Posterior cingulate gyrus (tissue), 11 donors: ENCODE measurements at regions of chr16 and their contacts with region 1.

Region 1: DNA sequence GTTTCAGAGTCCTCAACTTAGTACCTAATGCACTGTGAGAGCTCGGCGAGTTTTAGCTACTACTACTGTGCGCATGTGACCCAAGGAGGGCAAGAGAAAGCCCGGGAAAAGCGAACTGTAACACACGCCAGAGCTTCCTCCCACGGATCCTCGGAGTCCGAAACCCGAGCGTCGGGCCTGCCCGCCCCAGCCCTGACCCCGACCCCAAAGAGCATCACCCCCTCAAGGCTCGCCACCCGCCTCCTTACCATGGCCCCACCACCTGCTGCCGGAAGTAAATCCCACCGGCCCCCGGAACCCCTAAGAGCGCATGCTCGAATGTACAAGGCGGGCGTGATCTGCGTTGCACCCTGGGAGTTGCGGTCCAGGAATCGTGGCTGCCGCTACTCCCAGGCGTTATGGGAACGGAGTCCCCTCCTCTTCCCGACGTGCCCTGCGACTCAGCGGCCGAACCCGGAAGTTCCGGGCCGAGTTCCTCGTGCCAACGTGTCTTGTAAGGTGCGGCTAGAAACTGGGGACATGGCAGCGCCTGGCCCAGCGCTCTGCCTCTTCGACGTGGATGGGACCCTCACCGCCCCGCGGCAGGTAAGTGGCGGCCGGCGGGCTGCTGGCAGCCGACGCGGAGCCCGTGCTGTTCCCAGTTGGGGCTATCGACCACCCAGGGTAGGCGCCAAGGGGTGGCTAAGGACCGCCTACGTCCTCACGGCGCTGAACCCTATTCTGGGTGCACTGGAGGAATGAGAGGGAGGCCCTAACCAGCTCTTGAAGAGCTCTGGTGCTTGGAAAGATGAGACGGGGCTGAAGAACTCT is at the starts of genes PMM2 and TMEM186:
- DNase-seq: peak; percentile 98 to 100 (median 98)

Region 2: GRCh38 chr16:8567750-8568617 is 229.6 kb before region 1 on chr16:
- intact Hi-C with region 1: loop called (anchors 2 kb)
- DNase-seq: peak; percentile 32 to 95 (median 74)

Region 3: DNA sequence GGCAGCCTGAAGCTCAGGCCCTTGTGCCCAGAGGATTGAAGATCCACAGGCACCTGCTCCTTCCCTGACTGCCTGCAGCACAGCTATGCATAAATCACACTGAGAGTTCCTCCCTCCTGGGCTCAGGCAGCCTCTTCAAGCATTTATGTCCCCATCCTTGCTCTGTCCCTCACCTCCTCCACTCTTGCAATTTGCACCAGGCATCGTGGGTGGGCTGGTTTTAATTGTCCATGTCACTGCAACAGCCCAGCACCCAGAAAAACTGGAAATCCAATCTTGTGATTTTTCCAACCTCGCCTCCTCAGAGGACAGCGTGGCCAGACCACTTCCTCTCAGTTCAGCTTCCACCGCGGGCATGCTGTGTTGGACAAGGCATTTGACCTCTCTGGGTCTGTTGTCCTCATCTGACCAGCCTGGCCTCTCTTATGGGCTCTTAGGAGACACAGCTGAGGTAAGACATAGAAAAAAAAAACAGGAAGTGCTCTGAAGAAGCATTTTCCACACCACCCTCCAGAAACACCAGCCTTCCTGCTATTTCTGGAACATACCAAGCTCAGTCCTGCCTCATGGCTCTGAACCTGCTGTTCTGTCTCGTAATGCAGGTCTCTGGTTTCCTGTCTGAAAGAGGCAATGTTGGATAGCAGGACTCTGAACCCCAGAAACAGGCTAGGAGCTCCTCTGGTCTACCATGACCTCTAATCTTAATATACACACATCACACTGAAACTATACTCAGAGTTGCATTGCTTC is 215.6 kb before region 1 on chr16:
- intact Hi-C with region 1: no loop called
- DNase-seq: peak in 7 of 10 donors; percentile 18 to 87 (median 39)

Region 4: DNA sequence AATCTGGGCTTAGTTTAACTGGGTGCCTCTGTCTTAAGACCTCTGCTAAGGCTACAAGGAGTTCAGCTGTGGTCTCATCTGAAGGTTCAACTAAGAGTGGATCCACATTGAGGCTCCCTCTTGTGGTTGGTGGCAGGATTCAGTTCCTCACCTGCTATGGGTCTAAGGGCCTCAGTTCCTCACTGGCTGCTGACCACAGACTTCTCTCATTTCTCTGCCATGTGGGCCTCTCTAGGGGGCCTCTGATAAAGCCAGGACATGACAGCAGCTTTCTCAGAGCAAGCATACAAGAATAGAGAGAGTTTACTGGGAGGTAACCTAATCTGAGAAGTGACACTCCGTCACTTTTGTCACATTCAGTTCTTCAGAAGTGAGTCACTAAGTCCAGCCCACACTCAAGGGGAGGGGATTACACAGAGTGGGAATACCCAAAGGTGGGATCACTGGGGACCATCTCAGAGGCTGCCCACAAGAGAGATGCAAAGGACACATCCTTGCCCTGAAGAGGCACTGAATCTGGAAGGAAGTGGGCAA is 142.3 kb before region 1 on chr16:
- intact Hi-C with region 1: loop called (anchors 5 kb)
- DNase-seq: no peak

Region 5: DNA sequence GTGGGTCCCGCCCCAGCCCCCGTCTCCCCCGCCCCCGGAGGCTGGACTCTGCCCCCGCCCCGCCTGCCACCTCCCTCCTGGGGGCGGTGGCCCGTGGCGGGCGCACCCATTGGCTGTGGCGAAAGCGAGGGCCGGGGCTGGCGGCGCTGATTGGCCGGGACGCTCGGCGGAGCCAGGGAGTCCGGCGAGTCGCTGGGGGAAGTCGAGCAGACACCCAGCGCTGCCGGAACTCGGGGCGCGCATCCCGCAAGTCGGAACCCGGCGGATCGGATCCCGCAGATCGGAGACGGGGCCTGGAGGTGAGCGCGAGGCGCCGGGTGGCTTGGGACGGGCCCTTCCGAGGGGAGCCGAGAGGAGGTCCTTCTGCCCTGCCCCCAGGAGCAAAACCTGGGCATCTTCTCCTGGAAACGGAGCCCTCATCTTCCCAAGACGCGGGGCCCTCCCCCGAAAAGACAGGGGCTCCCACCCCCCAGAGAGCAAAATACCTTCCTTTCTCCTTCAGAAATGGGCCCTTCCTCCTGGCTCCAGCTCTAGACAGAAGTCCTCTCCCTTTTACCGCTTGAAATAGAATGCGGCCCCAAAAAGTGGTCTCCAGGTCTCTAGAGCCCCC is 123.1 kb before region 1 on chr16 and contains the start of gene ABAT:
- intact Hi-C with region 1: loop called (anchors 5 kb)
- DNase-seq: peak; percentile 88 to 99 (median 95)

Region 6: GRCh38 chr16:8868416-8869211 is 71.0 kb after region 1 on chr16 and contains the start of gene CARHSP1:
- intact Hi-C with region 1: loop called (anchors 5 kb)
- DNase-seq: peak; percentile 62 to 97 (median 72)

Region 7: DNA sequence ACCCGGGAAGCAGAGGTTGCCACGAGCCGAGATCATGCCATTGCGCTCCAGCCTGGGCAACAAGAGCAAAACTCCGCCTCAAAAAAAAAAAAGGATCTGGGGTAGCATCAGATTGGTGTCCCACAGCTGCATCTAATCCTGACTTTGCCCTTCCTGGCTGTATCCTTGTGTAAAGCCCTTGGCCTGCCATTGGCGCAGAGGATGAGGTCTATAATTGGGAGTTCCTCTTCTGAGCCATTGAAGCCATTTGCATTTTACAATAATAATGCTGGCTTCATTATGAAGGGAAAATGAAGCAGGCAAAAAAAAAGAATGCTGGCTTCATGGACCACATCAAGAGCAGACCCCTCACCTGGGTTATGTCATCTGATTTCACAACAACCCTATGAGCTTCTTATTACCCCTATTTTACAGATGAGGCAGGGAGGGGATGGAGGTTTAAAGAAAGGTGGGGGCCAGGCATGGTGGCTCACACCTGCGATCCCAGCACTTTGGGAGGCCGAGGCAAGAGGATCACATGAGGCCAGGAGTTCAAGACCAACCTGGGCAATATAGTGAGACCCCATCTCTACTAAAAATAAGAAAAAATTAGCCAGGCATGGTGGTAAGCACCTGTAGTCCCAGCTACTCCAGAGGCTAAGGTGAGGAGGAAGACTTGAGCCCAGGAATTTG is 83.4 kb after region 1 on chr16:
- intact Hi-C with region 1: loop called (anchors 5 kb)
- DNase-seq: peak in 3 of 10 donors; percentile 4 to 25 (median 24)